Activated naive CD4-positive, alpha-beta T cell treated with anti-CD3 and anti-CD28 coated beads for 36 hours (primary cell): ENCODE measurements at regions of chr1 and their contacts with region 1.

Region 1: GRCh38 chr1:179142889-179143299 is 61.0 kb downstream of the TOR3A start:
- DNase-seq: peak; percentile 30
- H3K4me3 Mint-ChIP-seq: peak overlapping the region; percentile 32
- H3K27ac Mint-ChIP-seq: peak overlapping the region; percentile 68
- H3K4me1 Mint-ChIP-seq: peaks cover 41% of the 10 kb centered on the region
- H3K27me3 Mint-ChIP-seq: no peaks in the 10 kb centered on the region

Region 2: DNA sequence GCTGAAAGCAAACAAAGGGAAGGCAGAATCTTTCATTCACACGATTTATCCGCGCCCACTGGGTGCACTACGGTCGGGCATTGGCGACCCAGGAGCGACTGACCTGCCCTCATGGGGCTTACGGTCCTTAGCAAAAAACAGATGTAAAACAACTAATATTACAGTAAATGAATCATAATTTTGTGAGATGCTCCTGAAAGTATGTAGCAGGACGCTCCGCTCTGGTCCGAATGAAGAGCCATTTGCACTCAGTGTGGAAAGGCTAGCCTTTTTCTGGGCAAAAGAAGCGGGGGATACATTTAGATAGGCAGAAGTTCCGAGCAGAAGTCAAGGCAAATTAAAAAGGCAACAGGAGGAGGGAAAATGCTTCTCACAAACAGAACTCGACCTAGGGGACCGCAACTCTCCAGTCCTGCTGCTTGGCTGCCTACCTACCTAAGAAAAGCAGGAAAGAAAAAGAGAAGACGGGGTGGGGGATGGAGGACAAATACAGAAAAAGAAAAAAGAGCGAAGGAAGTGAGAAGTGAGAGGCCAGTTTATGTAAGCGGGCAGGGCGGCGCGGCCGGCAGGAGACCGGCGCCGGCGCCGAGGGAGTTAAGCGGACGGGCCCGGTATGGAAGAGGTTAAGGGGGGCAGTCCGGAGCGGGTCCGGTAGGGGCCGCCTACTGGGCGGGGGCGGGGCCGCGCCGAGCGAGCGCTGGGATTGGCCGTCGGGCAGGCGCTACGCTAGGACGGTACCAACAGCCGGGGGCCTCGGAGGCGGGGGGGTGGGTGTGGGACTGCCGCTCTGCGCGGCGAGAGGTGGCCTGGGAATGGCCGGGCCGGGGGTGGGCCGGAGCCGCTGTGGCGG is 117.5 kb before region 1 on chr1 and contains the start of gene FAM20B:
- CTCF ChIA-PET with region 1: no interaction called
- intact Hi-C with region 1: loop called (anchors 2 kb)
- DNase-seq: peak; percentile 91
- H3K4me3 Mint-ChIP-seq: peak within 1 kb of the TSS; percentile 85
- H3K27ac Mint-ChIP-seq: peak within 1 kb of the TSS; percentile 78
- H3K4me1 Mint-ChIP-seq: peaks cover 34% of the 10 kb centered on the region
- H3K27me3 Mint-ChIP-seq: no peaks in the 10 kb centered on the region
- total RNA-seq, gene FAM20B: 35.1 to 36.1 TPM

Region 3: GRCh38 chr1:179190861-179191260 is 48.0 kb after region 1 on chr1:
- CTCF ChIA-PET with region 1: no interaction called
- intact Hi-C with region 1: loop called (anchors 2 kb)
- DNase-seq: no peak
- H3K4me3 Mint-ChIP-seq: no peak overlapping the region
- H3K27ac Mint-ChIP-seq: no peak overlapping the region
- H3K4me1 Mint-ChIP-seq: peaks cover 20% of the 10 kb centered on the region
- H3K27me3 Mint-ChIP-seq: no peaks in the 10 kb centered on the region

Region 4: GRCh38 chr1:179229214-179230140 is 86.6 kb after region 1 on chr1 and contains the start of gene ABL2:
- CTCF ChIA-PET with region 1: no interaction called
- intact Hi-C with region 1: loop called (anchors 2 kb)
- DNase-seq: peak; percentile 49
- H3K4me3 Mint-ChIP-seq: peak within 1 kb of the TSS; percentile 90
- H3K27ac Mint-ChIP-seq: peak within 1 kb of the TSS; percentile 85
- H3K4me1 Mint-ChIP-seq: peaks cover 31% of the 10 kb centered on the region
- H3K27me3 Mint-ChIP-seq: no peaks in the 10 kb centered on the region
- total RNA-seq, gene ABL2: 8.1 TPM

Region 5: DNA sequence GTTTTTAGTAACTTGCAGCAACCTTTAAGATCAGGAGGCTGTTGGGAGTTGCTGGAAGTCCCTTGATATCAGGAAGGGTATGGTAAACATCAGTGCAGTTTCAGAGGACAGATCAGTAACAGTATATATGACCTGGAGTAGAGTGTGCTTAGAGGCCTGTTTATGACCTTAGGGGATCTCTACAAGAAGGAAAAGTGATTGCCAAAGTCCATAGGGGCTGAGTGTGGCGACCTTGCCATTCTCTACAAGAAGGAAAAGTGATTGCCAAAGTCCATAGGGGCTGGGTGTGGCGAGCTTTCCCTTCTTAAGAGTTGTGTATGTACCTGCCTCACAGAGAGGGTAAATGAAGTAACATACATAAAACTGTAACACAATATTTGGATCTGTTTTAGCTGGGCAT is 194.4 kb after region 1 on chr1:
- CTCF ChIA-PET with region 1: no interaction called
- intact Hi-C with region 1: no loop called
- DNase-seq: no peak
- H3K4me3 Mint-ChIP-seq: no peak overlapping the region
- H3K27ac Mint-ChIP-seq: no peak overlapping the region
- H3K4me1 Mint-ChIP-seq: peaks cover 4% of the 10 kb centered on the region
- H3K27me3 Mint-ChIP-seq: no peaks in the 10 kb centered on the region

Region 6: DNA sequence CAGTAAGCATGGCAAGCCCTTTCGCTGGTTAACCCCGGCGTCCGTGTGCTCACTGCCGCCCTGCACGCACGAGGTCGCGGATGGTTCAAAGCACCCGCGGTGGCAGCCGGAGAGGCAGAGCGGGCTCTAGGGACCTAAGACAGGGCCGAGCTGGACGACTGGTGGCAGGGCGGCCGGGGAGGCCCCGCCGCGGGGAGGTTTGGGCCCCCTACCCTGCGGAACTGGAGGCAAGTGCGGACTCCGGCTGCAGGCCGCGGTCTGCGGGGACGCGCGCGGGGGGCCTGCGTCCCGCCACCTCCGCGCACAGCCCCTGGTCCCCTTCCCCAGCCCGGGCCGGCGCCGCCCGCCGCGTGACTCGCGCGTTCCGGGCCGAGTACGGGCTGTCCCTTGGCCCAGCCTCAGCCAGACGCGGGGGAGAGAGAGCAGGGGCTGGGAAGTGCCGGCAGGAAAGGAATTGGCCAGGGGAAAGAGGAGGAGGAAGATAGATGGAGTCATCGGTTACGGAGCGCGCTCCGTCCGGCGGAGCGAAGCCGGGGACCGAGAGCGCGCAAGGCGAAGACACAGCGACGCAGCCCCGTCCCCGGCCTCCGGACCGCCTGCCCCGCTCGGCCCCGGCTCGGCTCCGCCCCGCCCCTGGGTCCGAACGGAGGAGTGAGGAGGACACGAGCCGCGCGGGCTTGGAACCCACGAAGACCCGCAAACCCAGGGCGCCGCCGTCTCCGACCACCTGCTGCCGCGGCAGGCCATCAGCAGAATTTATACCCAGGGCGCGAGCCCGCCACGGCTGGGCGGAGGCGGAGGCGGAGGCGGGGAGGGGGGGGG is 1086.5 kb after region 1 on chr1:
- CTCF ChIA-PET with region 1: no interaction called
- intact Hi-C with region 1: loop called (anchors 10 kb)
- DNase-seq: peak; percentile 14
- H3K4me3 Mint-ChIP-seq: peak overlapping the region; percentile 66
- H3K27ac Mint-ChIP-seq: no peak overlapping the region
- H3K4me1 Mint-ChIP-seq: peaks cover 26% of the 10 kb centered on the region
- H3K27me3 Mint-ChIP-seq: peaks cover 66% of the 10 kb centered on the region